Adrenal gland (tissue), 19 donors: ENCODE measurements at regions of chr16 and their contacts with region 1.

Region 1: DNA sequence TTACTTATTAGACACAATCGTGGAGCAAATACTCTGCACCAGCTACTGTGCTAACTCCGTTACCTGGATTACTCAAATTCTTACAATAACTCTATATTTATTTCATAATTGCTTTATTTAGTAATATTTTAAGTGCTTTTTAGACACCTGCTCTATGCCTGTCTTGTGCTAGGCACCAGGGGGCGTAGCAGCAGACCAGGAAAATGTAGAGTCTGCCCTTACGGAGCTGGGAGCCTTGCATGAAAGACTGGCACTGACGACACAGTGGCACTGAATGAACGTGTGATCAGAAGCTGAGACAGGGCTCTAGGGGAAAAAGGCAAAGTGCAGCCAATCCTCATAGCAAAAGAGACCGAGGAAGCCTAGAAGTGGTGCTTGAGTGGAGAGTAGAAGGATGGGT is 486.5 kb downstream of the CDH13 start:
- DNase-seq: peak in 4 of 7 donors; percentile 28 to 53 (median 35)
- H3K4me3 ChIP-seq: no peak overlapping the region
- H3K27ac ChIP-seq: no peak overlapping the region
- H3K4me1 ChIP-seq: no peaks in the 10 kb centered on the region
- H3K27me3 ChIP-seq: peaks cover 4% of the 10 kb centered on the region
- CTCF ChIP-seq: peak; percentile 25 to 47 (median 42)
- POLR2A ChIP-seq: no peak

Region 2: GRCh38 chr16:83023640-83024039 is 89.7 kb before region 1 on chr16:
- intact Hi-C with region 1: no loop called
- DNase-seq: no peak
- H3K4me3 ChIP-seq: no peak overlapping the region
- H3K27ac ChIP-seq: no peak overlapping the region
- H3K4me1 ChIP-seq: no peaks in the 10 kb centered on the region
- H3K27me3 ChIP-seq: no peaks in the 10 kb centered on the region
- CTCF ChIP-seq: no peak
- POLR2A ChIP-seq: no peak

Region 3: DNA sequence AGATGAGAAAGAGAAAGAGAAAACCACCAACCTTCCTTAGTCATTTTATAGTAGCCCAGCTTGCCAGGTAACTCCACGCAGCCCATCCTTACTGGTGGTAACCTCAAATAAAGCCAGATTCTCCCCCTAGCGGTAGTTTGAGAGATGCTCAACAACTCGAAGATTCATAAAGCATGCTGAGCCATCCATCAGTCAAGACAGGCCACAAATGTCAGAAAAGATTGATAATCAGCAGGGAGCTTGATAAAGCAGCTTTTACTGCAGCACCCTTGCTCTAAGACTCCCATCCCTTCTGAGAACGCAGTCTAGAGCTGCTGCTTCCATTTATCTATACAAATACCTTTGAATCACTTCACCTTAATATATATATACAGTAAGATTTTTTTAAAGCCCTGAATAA is 242.9 kb after region 1 on chr16:
- intact Hi-C with region 1: loop called in 1 of 2 experiments (anchors 10 kb)
- DNase-seq: peak in 4 of 7 donors; percentile 29 to 41 (median 38)
- H3K4me3 ChIP-seq: no peak overlapping the region
- H3K27ac ChIP-seq: no peak overlapping the region
- H3K4me1 ChIP-seq: no peaks in the 10 kb centered on the region
- H3K27me3 ChIP-seq: no peaks in the 10 kb centered on the region
- CTCF ChIP-seq: peak; percentile 40 to 61 (median 50)
- POLR2A ChIP-seq: no peak